ENCODE measurements at regions of chr14 and their contacts with region 1.

Region 1: GRCh38 chr14:24332268-24332993 is 2.4 kb downstream of the ADCY4 start:
- DNase-seq: peak; percentile 71 to 93
- ATAC-seq: peak; percentile 71 to 84
- H3K4me3 ChIP-seq: no peak overlapping the region; the same call in 2 of the 3 replicates
- H3K27ac ChIP-seq: peak overlapping the region in 1 of 2 experiments; percentile 45; a peak in 1 of 6 replicates
- H3K4me1 ChIP-seq: peaks cover 3% of the 10 kb centered on the region; the same call in 1 of the 3 replicates
- CTCF ChIP-seq: peak; percentile 46
- EP300 ChIP-seq: no peak
- POLR2A ChIP-seq: no peak
- RAD21 ChIP-seq: peak in 1 of 2 experiments; percentile 46; a peak in 3 of 5 replicates

Region 2: GRCh38 chr14:24241829-24242443 is 90.5 kb before region 1 on chr14:
- CTCF ChIA-PET with region 1: interaction called, 23 read pairs
- POLR2A ChIA-PET with region 1: interaction called, 5 read pairs
- DNase-seq: peak in 1 of 2 experiments; percentile 97
- ATAC-seq: peak; percentile 89 to 93
- H3K4me3 ChIP-seq: peak overlapping the region; percentile 64
- H3K27ac ChIP-seq: peak overlapping the region; percentile 89 to 99
- H3K4me1 ChIP-seq: peaks cover 11% of the 10 kb centered on the region
- CTCF ChIP-seq: no peak
- EP300 ChIP-seq: no peak
- POLR2A ChIP-seq: no peak
- RAD21 ChIP-seq: no peak

Region 3: DNA sequence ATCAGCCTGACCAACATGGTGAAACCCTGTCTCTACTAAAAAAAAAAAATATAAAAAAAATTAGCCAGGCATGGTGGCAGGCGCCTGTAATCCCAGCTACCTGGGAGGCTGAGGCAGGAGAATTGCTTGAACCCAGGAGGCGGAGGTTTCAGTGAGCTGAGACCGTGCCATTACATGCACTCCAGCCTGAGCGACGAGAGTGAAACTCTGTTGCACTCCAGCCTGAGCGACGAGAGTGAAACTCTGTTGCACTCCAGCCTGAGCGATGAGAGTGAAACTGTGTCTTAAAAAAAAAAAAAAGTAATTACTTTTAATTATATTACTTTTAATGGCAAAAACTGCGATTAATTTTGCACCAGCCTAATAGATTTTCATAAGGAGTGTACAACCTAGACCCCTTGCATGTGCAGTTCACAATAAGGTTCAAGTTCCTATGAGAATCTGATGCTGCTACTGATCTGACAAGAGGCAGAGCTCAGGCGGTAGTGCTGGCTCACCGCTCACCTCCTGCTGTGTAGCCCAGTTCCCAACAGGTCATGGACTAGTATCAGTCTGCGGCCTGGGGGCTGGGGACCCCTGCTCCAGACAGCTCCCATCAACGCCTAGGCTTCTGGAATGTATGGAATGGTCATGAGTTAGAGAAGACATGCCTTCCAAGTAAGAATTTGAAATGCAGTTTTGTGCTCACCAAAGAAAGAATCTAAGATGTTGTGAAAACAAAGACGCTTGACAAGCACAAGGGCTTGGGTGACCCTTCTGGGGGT is 11.0 kb before region 1 on chr14:
- CTCF ChIA-PET with region 1: interaction called, 37 read pairs
- POLR2A ChIA-PET with region 1: no interaction called
- DNase-seq: no peak
- ATAC-seq: no peak
- H3K4me3 ChIP-seq: no peak overlapping the region
- H3K27ac ChIP-seq: no peak overlapping the region
- H3K4me1 ChIP-seq: peaks cover 11% of the 10 kb centered on the region
- CTCF ChIP-seq: no peak
- EP300 ChIP-seq: no peak
- POLR2A ChIP-seq: no peak
- RAD21 ChIP-seq: no peak

Region 4: GRCh38 chr14:24366721-24367513 is 34.5 kb after region 1 on chr14:
- CTCF ChIA-PET with region 1: interaction called, 25 read pairs
- POLR2A ChIA-PET with region 1: no interaction called
- DNase-seq: peak; percentile 43 to 84
- ATAC-seq: peak; percentile 72 to 79
- H3K4me3 ChIP-seq: peak overlapping the region; percentile 39
- H3K27ac ChIP-seq: peak overlapping the region; percentile 45 to 81; a peak in 5 of 6 replicates
- H3K4me1 ChIP-seq: peaks cover 15% of the 10 kb centered on the region
- CTCF ChIP-seq: no peak
- EP300 ChIP-seq: no peak
- POLR2A ChIP-seq: no peak
- RAD21 ChIP-seq: no peak

Region 5: GRCh38 chr14:24381363-24382063 is 49.1 kb after region 1 on chr14:
- CTCF ChIA-PET with region 1: interaction called, 20 read pairs
- POLR2A ChIA-PET with region 1: no interaction called
- DNase-seq: no peak
- ATAC-seq: no peak
- H3K4me3 ChIP-seq: no peak overlapping the region
- H3K27ac ChIP-seq: no peak overlapping the region
- H3K4me1 ChIP-seq: no peaks in the 10 kb centered on the region
- CTCF ChIP-seq: no peak
- EP300 ChIP-seq: no peak
- POLR2A ChIP-seq: no peak
- RAD21 ChIP-seq: no peak

Region 6: DNA sequence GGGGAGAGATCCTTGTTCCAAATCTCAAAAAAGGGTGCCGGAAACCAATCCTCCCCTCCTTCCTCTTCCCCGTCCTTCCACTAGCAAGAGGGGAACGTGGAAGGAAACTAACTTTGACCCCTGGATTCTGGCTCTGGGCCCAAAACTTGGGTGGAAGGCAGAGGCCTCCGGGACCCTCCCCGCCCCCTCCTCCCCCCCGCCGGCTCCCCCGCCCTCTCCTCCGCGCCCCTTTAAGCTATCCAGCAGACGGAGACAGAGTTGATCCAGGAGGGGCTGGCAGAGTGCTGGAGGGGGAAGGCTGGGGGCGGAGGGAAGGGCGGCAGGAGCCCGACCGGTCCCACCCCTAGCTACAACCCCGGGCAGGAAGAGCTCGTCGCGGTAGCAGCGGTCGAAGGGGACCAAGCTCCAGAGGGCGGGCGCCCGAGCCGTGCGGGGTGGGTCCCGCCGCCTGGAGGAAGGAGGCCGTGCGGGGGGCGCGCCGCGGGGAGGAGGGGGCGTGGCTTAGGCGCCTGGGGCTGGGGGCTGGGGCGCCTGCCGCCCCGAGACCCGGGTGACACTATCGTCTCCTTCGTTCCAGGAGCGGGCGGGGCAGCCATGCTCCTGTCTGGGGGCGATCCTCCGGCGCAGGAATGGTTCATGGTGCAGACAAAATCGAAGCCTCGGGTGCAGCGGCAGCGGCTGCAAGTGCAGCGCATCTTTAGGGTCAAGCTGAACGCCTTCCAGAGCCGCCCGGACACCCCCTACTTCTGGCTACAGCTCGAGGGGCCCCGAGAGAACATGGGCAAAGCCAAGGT is 66.4 kb after region 1 on chr14 and contains the start of gene NYNRIN:
- CTCF ChIA-PET with region 1: interaction called, 11 read pairs
- POLR2A ChIA-PET with region 1: no interaction called
- DNase-seq: no peak
- ATAC-seq: peak; percentile 44 to 80; a peak in 4 of 6 replicates
- H3K4me3 ChIP-seq: peak within 1 kb of the TSS; percentile 65
- H3K27ac ChIP-seq: peak within 1 kb of the TSS; percentile 74 to 85
- H3K4me1 ChIP-seq: peaks cover 16% of the 10 kb centered on the region; the same call in 1 of the 3 replicates
- CTCF ChIP-seq: no peak
- EP300 ChIP-seq: no peak
- POLR2A ChIP-seq: no peak
- RAD21 ChIP-seq: no peak
- polyA plus RNA-seq, gene NYNRIN: 0.44 and 0.60 TPM in 2 replicates

Region 7: GRCh38 chr14:24442273-24443052 is 110.0 kb after region 1 on chr14 and contains the start of gene SDR39U1:
- CTCF ChIA-PET with region 1: interaction called, 1,142 read pairs
- POLR2A ChIA-PET with region 1: interaction called, 19 read pairs
- DNase-seq: peak; percentile 95 to 99
- ATAC-seq: peak; percentile 87 to 94
- H3K4me3 ChIP-seq: peak within 1 kb of the TSS; percentile 86
- H3K27ac ChIP-seq: peak within 1 kb of the TSS; percentile 97 to 98
- H3K4me1 ChIP-seq: peaks cover 6% of the 10 kb centered on the region
- CTCF ChIP-seq: no peak
- EP300 ChIP-seq: no peak
- POLR2A ChIP-seq: peak; percentile 85
- RAD21 ChIP-seq: no peak
- polyA plus RNA-seq, gene SDR39U1: 57.3 and 64.4 TPM in 2 replicates

Measured in A549 (cell line).